ENCODE measurements at regions of chr1 and their contacts with region 1.

Region 1: DNA sequence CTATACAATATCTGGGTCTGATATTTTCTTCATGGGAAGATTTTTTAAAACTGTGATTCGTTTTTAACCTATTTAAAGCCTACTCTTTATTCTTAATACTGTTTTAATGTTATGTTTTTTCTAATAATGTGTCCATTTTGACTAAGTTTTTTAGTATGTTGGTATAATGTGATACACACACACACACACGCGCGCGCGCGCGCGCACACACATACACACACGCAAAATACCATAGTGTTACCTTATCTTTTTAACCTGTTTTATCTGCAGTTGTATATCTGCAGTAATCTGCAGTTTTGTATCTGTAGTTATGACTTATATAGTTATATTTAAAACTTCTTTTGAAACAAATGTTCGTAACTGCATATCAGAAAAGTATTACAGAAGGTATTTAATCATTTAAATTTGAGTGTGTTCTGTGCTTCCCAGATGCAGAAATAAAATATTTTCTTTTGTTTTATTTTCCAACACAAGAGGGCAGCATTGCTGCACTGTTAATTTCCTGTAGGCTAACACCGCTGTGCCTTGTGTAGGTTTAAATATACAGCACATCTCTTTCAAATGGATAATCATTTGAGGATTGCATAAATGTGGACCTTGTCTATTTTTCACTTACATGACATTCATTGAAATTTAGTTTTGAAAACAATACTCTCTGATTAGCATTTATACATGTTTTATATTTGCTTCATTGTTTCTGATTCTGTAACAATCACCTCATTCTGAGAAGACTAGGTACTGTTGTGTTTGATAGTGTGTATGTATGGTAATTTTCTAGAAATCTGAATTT is 166.1 kb downstream of the PDE4B start:
- DNase-seq: no peak
- H3K4me3 ChIP-seq: no peak overlapping the region
- H3K27ac ChIP-seq: no peak overlapping the region
- H3K4me1 ChIP-seq: peaks cover 0 to 4% (median 0%) of the 10 kb centered on the region in 6 donors
- H3K27me3 ChIP-seq: no peaks in the 10 kb centered on the region
- CTCF ChIP-seq: peak in 9 of 11 experiments; percentile 26 to 72 (median 55)
- POLR2A ChIP-seq: no peak

Region 2: GRCh38 chr1:66090859-66091457 is 132.2 kb after region 1 on chr1:
- intact Hi-C with region 1: no loop called
- DNase-seq: no peak
- H3K4me3 ChIP-seq: no peak overlapping the region
- H3K27ac ChIP-seq: no peak overlapping the region
- H3K4me1 ChIP-seq: no peaks in the 10 kb centered on the region
- H3K27me3 ChIP-seq: no peaks in the 10 kb centered on the region
- CTCF ChIP-seq: no peak
- POLR2A ChIP-seq: no peak

Region 3: DNA sequence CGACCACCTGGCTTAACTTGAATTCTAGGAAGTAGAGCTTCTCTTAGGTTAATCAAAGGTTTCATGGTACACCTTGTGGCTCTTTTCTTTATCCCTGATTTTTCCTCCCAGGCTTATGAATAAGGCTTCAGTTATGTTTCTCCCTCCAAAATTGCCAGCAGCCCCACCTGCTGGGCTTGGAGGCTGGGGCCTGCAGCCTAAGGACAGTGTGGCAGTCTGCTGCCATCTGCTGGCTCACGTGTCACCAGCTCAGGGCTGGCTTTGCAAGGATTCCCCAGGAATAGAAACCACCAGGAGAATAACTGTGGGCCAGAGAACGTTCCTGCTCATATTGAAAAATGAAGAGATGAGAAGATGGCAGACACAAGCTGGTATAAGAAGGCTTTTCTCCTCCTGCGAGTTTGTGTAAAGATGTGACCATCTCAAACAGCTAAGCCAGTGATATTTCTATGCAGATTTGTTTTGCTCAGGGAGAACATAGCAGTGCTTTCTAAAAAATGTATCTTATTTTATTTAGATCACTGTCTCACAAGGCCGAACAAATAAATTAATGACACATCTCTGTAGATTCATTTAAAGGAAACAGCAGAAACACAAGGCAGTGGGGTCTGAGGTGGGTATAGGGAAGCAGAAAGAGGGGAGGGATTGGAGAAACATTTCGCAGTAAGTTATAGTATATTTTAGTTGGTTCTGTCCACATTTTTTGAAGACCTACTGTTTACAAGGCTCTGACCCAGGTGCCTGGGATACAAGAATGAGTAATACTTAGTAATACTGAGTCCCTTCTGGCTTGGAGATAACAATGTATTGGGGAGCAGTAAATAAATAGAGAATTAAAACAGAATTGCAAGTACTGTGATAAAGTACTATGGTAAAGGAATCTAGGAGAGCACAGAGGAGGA is 284.1 kb after region 1 on chr1:
- intact Hi-C with region 1: loop called (anchors 5 kb)
- DNase-seq: peak; percentile 91
- H3K4me3 ChIP-seq: no peak overlapping the region
- H3K27ac ChIP-seq: no peak overlapping the region
- H3K4me1 ChIP-seq: peaks cover 0 to 25% (median 2%) of the 10 kb centered on the region in 6 donors
- H3K27me3 ChIP-seq: peaks cover 0 to 6% (median 0%) of the 10 kb centered on the region in 7 donors
- CTCF ChIP-seq: peak; percentile 81 to 96 (median 94)
- POLR2A ChIP-seq: no peak

Region 4: DNA sequence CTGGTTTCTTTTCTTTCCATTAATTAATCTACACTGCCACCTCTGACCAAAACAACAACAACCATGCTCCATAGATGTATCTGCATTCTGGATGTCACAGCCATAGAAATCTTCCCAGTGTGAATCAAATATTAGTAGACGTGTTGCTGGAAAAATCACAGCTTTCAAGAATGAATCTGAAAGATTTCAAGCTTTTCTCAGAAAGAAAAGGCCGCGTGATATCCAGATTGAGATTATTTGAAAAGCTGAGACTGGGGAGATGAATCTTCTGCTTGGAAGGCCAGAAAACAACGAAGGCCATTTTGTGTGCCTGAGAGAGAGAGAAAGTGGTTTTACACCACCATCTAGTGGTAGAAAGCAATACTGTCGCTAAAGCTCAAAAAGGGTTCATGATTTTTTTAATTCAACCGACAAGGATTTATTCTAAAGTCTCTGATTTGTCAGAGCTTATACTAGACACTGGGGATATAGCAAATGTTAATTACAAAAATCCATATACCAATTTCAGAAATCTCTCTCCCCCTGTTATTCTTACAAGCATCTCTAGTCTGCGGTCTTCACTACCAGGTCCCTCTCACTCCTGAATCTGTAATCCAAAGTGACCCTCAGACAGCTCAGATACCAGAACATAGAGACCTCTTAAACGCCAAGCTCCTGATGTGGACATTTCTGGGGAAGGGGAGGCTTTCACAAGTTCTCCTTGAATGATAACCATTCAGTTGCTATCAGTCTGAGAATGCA is 487.7 kb after region 1 on chr1:
- intact Hi-C with region 1: loop called (anchors 2 kb)
- DNase-seq: no peak
- H3K4me3 ChIP-seq: peak overlapping the region in 1 of 8 donors; percentile 14
- H3K27ac ChIP-seq: peak overlapping the region in 7 of 8 donors; percentile 47 to 90 (median 81)
- H3K4me1 ChIP-seq: peaks cover 0 to 24% (median 15%) of the 10 kb centered on the region in 6 donors
- H3K27me3 ChIP-seq: no peaks in the 10 kb centered on the region
- CTCF ChIP-seq: peak; percentile 69 to 96 (median 88)
- POLR2A ChIP-seq: no peak